Colonic mucosa (tissue), 4 donors: ENCODE measurements at regions of chr5 and their contacts with region 1.

Region 1: GRCh38 chr5:69042915-69043658 is 50.7 kb upstream of the SLC30A5 start:
- DNase-seq: peak; percentile 84
- H3K4me3 ChIP-seq: peak overlapping the region; percentile 43
- H3K27ac ChIP-seq: peak overlapping the region; percentile 45
- H3K4me1 ChIP-seq: no peaks in the 10 kb centered on the region
- H3K27me3 ChIP-seq: no peaks in the 10 kb centered on the region
- CTCF ChIP-seq: peak; percentile 91

Region 2: GRCh38 chr5:69086206-69086605 is 43.1 kb after region 1 on chr5:
- intact Hi-C with region 1: loop called (anchors 5 kb)
- DNase-seq: no peak
- H3K4me3 ChIP-seq: no peak overlapping the region
- H3K27ac ChIP-seq: no peak overlapping the region
- H3K4me1 ChIP-seq: no peaks in the 10 kb centered on the region
- H3K27me3 ChIP-seq: no peaks in the 10 kb centered on the region
- CTCF ChIP-seq: no peak

Region 3: DNA sequence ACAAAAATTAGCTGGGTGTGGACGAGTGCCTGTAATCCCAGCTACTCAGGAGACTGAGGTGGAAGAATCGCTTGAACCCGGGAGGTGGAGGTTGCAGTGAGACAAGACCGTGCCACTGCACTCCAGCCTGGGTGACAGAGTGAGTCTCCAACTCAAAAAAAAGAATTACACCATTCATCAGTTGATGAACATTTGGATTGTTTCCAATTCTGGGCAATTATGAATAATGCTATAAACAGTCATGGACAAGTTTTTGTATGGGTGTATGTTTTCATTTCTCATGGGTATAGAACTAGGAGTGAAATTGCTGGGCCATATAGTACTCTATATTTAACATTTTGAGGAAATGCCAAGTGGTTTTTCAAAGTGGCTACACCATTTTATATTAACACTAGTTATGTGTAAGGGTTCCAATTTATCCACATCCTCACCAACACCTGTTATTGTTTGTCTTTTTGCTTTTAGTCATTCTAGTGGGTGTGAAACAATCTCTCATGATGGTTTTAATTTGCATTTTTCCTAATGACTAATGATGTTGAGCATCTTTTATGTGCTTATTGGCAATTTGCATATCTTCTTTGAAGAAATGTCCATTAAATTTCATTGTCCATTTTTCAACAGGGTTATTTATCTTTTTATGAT is 298.6 kb after region 1 on chr5:
- intact Hi-C with region 1: loop called (anchors 10 kb)
- DNase-seq: no peak
- H3K4me3 ChIP-seq: no peak overlapping the region
- H3K27ac ChIP-seq: no peak overlapping the region
- H3K4me1 ChIP-seq: no peaks in the 10 kb centered on the region
- H3K27me3 ChIP-seq: no peaks in the 10 kb centered on the region
- CTCF ChIP-seq: no peak